Mammary epithelial cell (primary cell): ENCODE measurements at regions of chr22 and their contacts with region 1.

Region 1: DNA sequence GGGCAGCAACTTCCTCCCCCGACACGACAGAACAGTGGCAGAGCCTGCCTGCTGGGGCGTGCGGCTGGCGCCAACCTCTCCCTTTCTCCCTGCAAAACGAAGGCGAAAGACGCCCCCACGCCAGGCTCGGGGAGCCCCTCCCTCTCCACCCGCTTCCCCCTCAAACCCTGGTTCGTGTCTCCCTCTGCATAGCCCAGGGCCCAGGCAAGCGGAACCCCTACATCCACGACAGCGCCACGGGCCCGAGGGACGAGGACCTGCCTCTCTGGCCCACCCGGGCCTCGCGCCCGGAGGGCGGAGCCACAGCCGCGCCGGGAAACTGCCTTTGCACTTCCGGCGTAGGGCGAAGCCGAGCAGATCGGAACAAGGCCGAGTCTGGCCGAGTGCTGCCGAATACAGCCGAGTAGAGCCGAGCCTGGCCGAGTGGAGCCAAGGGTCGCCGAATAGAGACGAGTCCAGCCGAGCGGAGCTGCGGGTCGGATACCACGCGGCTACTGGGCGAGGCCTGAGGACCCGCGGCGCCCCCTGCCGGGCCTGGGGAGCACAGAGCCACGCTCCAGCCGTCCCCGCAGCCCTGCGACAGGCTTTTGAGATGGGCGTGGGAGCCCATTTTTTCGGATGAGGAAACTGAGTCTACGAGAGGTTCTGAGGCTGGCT is 11.2 kb upstream of the C1QTNF6 start:
- DNase-seq: peak; percentile 94
- H3K4me3 ChIP-seq: peak overlapping the region; percentile 70 to 87 (median 84)
- H3K27ac ChIP-seq: peak overlapping the region; percentile 65
- H3K4me1 ChIP-seq: peaks cover 35% of the 10 kb centered on the region
- H3K27me3 ChIP-seq: no peaks in the 10 kb centered on the region
- CTCF ChIP-seq: peak; percentile 68 to 87

Region 2: DNA sequence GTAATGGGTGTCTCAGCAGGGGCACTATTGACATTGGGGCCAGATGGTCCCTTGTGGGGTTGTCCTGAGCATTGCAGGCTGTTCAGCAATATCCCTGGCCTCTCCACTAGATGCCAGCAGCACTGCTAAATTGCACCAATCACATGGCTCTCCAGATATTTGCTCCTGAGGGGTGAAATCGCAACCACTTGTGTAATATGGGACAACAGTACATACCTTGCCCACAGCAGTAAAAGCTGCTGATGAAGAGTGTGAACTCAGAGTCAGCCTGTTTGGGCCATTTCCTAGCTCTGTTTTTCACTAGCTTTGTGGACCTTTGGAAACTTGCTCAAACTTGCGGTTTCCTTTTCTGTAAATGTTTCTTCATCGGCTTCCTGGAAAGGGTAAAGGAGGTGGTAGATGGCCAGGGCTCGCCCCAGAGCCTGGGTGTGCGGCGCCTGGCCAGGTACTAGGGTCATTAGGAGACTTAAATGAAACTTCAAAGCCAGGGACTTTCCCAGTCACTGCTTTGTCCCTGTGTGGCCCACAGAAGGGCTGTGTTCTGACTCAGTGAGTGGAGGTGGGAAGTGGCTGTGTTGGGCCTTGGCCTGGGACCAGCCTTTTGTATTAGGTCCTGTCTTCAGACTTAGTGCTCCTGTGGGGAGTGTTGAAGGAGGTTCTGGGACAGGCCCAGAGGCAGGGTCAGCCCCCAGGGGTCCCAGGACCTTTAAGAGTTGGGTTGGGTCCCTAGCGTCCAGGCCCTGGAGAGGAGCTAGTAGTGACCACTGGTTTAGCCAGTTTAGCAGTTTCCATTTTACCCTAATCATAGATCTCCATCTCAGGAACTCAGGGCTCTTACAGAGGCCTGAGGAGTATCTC is 325.3 kb before region 1 on chr22:
- CTCF ChIA-PET with region 1: no interaction called
- dilution Hi-C with region 1: no loop called
- in situ Hi-C with region 1: no loop called
- intact Hi-C with region 1: loop called (anchors 5 kb)
- DNase-seq: peak; percentile 88
- H3K4me3 ChIP-seq: no peak overlapping the region
- H3K27ac ChIP-seq: peak overlapping the region; percentile 64
- H3K4me1 ChIP-seq: peaks cover 42% of the 10 kb centered on the region
- H3K27me3 ChIP-seq: no peaks in the 10 kb centered on the region
- CTCF ChIP-seq: peak; percentile 63 to 72

Region 3: GRCh38 chr22:37077884-37078485 is 121.2 kb before region 1 on chr22:
- CTCF ChIA-PET with region 1: no interaction called
- dilution Hi-C with region 1: no loop called
- in situ Hi-C with region 1: loop called in 1 of 2 experiments (anchors 10 kb)
- intact Hi-C with region 1: loop called (anchors 1 kb)
- DNase-seq: peak; percentile 7
- H3K4me3 ChIP-seq: no peak overlapping the region
- H3K27ac ChIP-seq: no peak overlapping the region
- H3K4me1 ChIP-seq: no peaks in the 10 kb centered on the region
- H3K27me3 ChIP-seq: no peaks in the 10 kb centered on the region
- CTCF ChIP-seq: peak; percentile 91 to 100

Region 4: GRCh38 chr22:37186228-37186996 is 12.8 kb before region 1 on chr22:
- CTCF ChIA-PET with region 1: no interaction called
- dilution Hi-C with region 1: no loop called
- in situ Hi-C with region 1: no loop called
- intact Hi-C with region 1: loop called (anchors 1 kb)
- DNase-seq: peak; percentile 68
- H3K4me3 ChIP-seq: no peak overlapping the region
- H3K27ac ChIP-seq: no peak overlapping the region
- H3K4me1 ChIP-seq: peaks cover 33% of the 10 kb centered on the region
- H3K27me3 ChIP-seq: no peaks in the 10 kb centered on the region
- CTCF ChIP-seq: no peak